ENCODE measurements at regions of chr14 and their contacts with region 1.

Region 1: GRCh38 chr14:80996049-80996901 is 40.9 kb downstream of the TSHR start:
- DNase-seq: peak; percentile 83
- ATAC-seq: peak; percentile 98
- H3K4me3 ChIP-seq: no peak overlapping the region
- H3K27ac ChIP-seq: no peak overlapping the region
- H3K4me1 ChIP-seq: no peaks in the 10 kb centered on the region
- H3K27me3 ChIP-seq: peaks cover 42% of the 10 kb centered on the region
- CTCF ChIP-seq: peak; percentile 83

Region 2: DNA sequence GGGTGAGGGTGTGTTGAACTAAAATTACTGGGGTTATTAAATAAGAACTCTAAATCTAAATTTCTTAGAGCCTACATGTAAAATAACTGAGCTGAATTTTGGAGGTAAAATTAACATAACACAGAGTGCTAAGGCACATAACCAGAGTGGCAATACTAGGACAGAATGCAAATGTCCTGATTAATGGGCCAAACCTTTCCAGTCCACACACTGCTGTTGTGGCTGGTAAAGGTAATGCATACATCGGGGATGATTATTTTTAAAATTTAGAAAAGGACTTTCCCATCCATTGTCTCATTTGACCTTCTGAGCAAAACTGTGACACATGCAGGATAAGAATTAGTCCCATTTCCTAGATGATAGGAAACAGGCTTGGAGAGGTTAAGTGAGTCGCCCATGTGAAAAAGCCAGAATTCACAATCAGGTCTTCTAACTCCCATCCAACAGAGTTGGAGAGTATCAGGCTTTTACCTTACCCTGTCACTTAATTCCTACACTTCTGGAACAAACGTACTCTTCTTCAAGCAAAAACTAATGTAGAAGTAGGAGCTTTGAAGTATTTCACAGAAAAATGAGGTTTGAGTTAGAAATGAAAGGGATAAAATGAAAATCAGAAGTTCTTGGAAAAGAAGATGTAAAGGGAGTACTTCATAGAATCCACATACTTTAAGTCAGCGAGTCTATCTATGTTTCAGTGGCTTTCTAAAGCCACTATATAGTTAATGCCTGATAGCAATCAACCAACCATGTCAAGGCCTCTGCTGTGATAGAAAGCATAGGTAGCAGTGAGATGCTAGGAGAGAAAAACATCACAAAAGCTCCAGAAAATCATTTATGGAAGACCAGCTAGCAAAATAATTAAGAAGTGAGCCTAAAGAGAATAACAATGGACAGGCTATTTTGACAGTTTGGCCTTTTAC is 450.1 kb before region 1 on chr14:
- CTCF ChIA-PET with region 1: no interaction called
- POLR2A ChIA-PET with region 1: no interaction called
- intact Hi-C with region 1: no loop called
- DNase-seq: no peak
- ATAC-seq: no peak
- H3K4me3 ChIP-seq: no peak overlapping the region
- H3K27ac ChIP-seq: no peak overlapping the region
- H3K4me1 ChIP-seq: no peaks in the 10 kb centered on the region
- H3K27me3 ChIP-seq: no peaks in the 10 kb centered on the region
- CTCF ChIP-seq: no peak

Region 3: DNA sequence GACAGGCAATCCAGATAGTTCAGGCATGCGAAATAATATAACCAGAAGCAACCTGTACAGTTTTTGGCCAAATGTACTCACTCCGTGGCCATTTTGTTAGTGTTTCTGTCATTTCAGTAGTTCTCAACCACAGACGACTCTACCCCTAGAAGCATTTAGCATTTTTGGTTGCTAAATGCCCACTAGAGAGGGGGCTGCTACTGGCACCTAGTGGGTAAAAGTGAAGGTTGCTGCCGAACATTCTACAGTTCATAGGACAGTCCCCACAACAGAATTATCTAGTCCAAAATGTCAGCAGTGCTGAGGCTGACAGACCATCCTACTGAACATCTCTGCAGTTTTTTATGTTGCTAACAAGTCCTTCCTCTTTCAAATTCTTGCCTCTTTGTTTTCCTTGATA is 66.5 kb after region 1 on chr14:
- CTCF ChIA-PET with region 1: interaction called, 8 read pairs
- POLR2A ChIA-PET with region 1: no interaction called
- intact Hi-C with region 1: loop called (anchors 1 kb)
- DNase-seq: peak; percentile 51
- ATAC-seq: peak; percentile 80
- H3K4me3 ChIP-seq: peak overlapping the region; percentile 14; the same call in 1 of the 2 replicates
- H3K27ac ChIP-seq: no peak overlapping the region
- H3K4me1 ChIP-seq: peaks cover 10% of the 10 kb centered on the region; the same call in 1 of the 2 replicates
- H3K27me3 ChIP-seq: peaks cover 31% of the 10 kb centered on the region; the same call in 1 of the 2 replicates
- CTCF ChIP-seq: peak; percentile 71

Region 4: GRCh38 chr14:81164167-81164774 is 168.0 kb after region 1 on chr14:
- CTCF ChIA-PET with region 1: no interaction called
- POLR2A ChIA-PET with region 1: no interaction called
- intact Hi-C with region 1: loop called (anchors 1 kb)
- DNase-seq: peak; percentile 89
- ATAC-seq: peak; percentile 98
- H3K4me3 ChIP-seq: no peak overlapping the region
- H3K27ac ChIP-seq: no peak overlapping the region
- H3K4me1 ChIP-seq: peaks cover 1% of the 10 kb centered on the region; the same call in 1 of the 2 replicates
- H3K27me3 ChIP-seq: no peaks in the 10 kb centered on the region
- CTCF ChIP-seq: peak; percentile 88

Region 5: GRCh38 chr14:81170104-81170828 is 174.0 kb after region 1 on chr14:
- CTCF ChIA-PET with region 1: interaction called, 9 read pairs
- POLR2A ChIA-PET with region 1: no interaction called
- intact Hi-C with region 1: loop called (anchors 1 kb)
- DNase-seq: peak; percentile 84
- ATAC-seq: peak; percentile 99
- H3K4me3 ChIP-seq: peak overlapping the region; percentile 92
- H3K27ac ChIP-seq: peak overlapping the region; percentile 88
- H3K4me1 ChIP-seq: peaks cover 14% of the 10 kb centered on the region
- H3K27me3 ChIP-seq: no peaks in the 10 kb centered on the region
- CTCF ChIP-seq: peak; percentile 91

Region 6: DNA sequence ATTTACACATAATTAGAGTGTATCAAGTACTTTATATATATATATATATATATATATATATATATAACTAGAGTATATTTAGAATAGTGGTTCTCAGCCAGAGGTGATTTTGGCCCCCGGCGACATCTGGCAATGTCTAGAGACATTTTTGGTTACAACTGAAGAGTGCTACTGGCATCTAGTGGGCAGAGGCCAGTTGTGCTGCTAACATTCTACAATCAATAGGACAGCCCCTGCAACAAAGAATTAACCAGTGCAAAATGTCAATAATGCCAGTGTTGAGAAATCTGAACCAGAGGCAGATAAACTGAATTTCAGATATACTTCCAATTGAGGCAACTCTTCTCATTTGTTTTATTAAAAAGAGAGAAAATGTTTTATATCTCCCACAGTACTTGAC is 215.6 kb after region 1 on chr14:
- CTCF ChIA-PET with region 1: interaction called, 4 read pairs
- POLR2A ChIA-PET with region 1: no interaction called
- intact Hi-C with region 1: loop called (anchors 1 kb)
- DNase-seq: peak; percentile 38
- ATAC-seq: 0 out of 2 replicates have a peak, but pooled peaks have one; percentile 58
- H3K4me3 ChIP-seq: no peak overlapping the region
- H3K27ac ChIP-seq: no peak overlapping the region
- H3K4me1 ChIP-seq: no peaks in the 10 kb centered on the region
- H3K27me3 ChIP-seq: no peaks in the 10 kb centered on the region
- CTCF ChIP-seq: peak; percentile 59

Region 7: GRCh38 chr14:81464247-81465002 is 468.1 kb after region 1 on chr14:
- CTCF ChIA-PET with region 1: interaction called, 3 read pairs
- POLR2A ChIA-PET with region 1: no interaction called
- intact Hi-C with region 1: loop called (anchors 1 kb)
- DNase-seq: peak; percentile 88
- ATAC-seq: peak; percentile 44; the same call in 1 of the 2 replicates
- H3K4me3 ChIP-seq: peak overlapping the region; percentile 61
- H3K27ac ChIP-seq: no peak overlapping the region
- H3K4me1 ChIP-seq: no peaks in the 10 kb centered on the region
- H3K27me3 ChIP-seq: no peaks in the 10 kb centered on the region
- CTCF ChIP-seq: peak; percentile 96